OCI-LY7 (cell line): ENCODE measurements at regions of chr11 and their contacts with region 1.

Region 1: GRCh38 chr11:110366291-110366690 is 63.5 kb upstream of the FDX1 start:
- DNase-seq: no peak
- H3K4me3 ChIP-seq: no peak overlapping the region
- H3K27ac ChIP-seq: no peak overlapping the region
- H3K4me1 ChIP-seq: peaks cover 6% of the 10 kb centered on the region
- CTCF ChIP-seq: no peak

Region 2: DNA sequence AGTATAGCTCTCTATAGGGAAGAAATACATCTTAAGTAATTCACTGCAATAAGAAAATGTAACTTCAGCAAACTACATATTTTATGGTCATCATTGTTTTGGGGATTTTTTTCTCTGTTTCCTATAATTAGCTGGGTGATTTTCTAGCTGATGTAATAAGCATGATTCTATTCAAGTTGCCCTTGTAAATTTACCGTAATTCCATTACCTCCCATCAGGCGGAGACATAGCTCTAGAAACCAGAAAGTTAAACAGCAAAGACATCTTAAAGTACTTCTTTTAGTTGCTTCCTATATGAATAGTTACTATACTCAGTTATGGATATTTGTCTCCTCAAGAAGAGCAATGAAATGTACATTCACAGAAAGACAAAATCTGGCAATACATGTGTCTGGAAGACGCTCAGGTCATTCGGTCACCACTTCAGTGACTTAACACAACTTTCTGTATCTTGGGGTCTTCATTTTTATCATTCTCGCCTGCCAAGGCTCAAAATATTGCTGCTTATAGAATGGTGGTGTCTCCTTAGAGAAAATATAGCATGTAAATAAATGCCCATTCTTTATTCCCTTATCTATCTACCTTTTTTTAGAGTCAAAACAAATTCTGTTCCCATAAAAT is 513.0 kb before region 1 on chr11:
- CTCF ChIA-PET with region 1: no interaction called
- POLR2A ChIA-PET with region 1: no interaction called
- intact Hi-C with region 1: loop called (anchors 5 kb)
- DNase-seq: peak; percentile 47
- H3K4me3 ChIP-seq: no peak overlapping the region
- H3K27ac ChIP-seq: no peak overlapping the region
- H3K4me1 ChIP-seq: no peaks in the 10 kb centered on the region
- CTCF ChIP-seq: peak; percentile 84